Activated CD4-positive, alpha-beta memory T cell treated with anti-CD3 and anti-CD28 coated beads, Interleukin-2, amount 10 ng/mL, durations not matched to agents 7 days and 5 days (primary cell): ENCODE measurements at regions of chr7 and their contacts with region 1.

Region 1: DNA sequence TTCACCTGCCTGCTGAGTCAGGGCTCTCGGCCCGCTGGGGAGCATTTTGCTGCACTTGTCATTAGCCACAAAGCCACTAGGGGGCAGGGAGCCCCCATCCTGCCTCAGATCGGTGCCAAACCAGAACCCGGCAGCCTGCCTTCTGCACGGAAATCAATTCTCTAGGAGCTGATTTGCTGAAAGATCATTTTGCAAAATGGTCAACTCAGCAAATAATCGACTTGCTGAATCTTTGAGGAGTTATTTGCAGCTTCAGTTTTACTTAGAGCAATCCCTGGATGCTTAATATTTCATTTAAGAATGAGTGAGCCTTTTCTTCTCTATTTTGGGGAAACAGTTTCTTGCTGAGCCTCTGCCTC is 1.7 kb upstream of the GIMAP8 start:
- DNase-seq: peak; percentile 93
- H3K4me3 Mint-ChIP-seq: peak overlapping the region; percentile 53
- H3K27ac Mint-ChIP-seq: peak overlapping the region; percentile 87
- H3K4me1 Mint-ChIP-seq: peaks cover 57% of the 10 kb centered on the region
- H3K27me3 Mint-ChIP-seq: no peaks in the 10 kb centered on the region

Region 2: DNA sequence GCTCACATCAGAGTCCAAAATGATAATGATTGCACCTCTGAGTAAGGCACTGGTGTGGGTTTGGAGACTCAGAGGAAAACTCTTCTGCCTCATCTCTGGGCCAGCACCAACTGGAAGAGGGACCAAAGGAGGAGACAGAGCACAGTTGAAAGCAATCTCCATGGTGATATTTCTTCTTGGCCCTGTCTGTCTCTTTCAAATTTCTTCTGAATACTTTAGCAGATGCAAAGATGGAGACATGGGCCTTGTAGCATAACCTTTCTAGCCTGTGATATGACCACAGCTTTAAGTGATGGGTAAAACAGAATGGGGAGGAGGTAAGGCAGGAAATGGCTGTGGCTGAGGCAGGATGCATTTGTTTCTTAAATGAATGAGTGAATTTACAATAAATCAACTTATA is 53.8 kb after region 1 on chr7:
- CTCF ChIA-PET with region 1: interaction called, 14 read pairs
- POLR2A ChIA-PET with region 1: interaction called, 63 read pairs
- DNase-seq: peak; percentile 68
- H3K4me3 Mint-ChIP-seq: peak overlapping the region; percentile 29
- H3K27ac Mint-ChIP-seq: peak overlapping the region; percentile 90
- H3K4me1 Mint-ChIP-seq: peaks cover 75% of the 10 kb centered on the region
- H3K27me3 Mint-ChIP-seq: no peaks in the 10 kb centered on the region

Region 3: DNA sequence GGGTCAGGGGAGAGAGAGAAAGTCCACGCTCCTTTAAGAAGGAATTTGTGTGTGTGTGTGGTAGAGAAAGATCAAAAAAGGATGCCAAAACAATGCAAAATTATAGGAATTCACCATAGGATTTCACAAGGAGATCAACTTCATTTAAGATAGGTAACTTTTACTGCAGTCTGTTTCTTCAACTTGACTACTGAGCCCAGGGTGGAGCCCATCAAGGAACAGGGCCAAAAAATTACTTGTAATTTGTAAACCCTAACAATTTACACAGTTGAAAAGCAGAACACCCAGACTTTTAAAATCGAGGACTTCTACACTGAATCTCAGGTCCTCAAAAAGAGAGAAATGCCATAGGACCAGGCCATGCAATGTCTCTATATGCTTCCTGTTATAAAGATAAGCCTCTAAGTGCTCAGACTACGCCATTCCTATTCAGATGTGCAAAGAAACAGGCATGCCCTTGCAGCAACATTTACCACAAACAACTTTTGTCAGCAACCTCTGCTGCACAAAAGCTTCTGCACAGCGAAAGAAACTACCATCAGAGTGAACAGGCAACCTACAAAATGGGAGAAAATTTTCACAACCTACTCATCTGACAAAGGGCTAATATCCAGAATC is 107.9 kb after region 1 on chr7:
- CTCF ChIA-PET with region 1: interaction called, 21 read pairs
- POLR2A ChIA-PET with region 1: interaction called, 3 read pairs
- DNase-seq: peak; percentile 55
- H3K4me3 Mint-ChIP-seq: peak overlapping the region; percentile 55
- H3K27ac Mint-ChIP-seq: peak overlapping the region; percentile 97
- H3K4me1 Mint-ChIP-seq: peaks cover 55% of the 10 kb centered on the region
- H3K27me3 Mint-ChIP-seq: no peaks in the 10 kb centered on the region

Region 4: DNA sequence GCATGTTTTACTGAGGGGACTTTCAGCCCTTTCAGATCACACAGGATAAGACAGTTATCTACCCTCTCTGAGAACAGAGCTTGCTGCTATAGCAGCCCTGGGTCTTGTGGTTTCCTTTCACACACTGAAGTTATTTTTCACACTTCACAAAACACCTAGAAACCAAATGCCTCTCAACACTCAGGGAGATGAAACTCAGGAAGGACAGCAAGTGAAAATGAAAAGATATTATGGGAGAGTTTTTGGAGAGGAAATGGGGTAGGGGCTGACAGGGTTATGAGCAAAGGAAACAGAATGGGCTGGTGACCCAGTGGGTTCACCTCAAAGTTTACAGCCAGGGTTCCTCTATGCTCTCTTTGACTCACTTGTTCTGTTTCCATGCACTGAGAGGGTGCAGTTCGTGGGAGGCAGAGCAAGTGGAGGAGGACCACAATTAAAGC is 219.7 kb after region 1 on chr7:
- CTCF ChIA-PET with region 1: interaction called, 7 read pairs
- POLR2A ChIA-PET with region 1: interaction called, 10 read pairs
- DNase-seq: peak; percentile 75
- H3K4me3 Mint-ChIP-seq: peak overlapping the region; percentile 41
- H3K27ac Mint-ChIP-seq: peak overlapping the region; percentile 95
- H3K4me1 Mint-ChIP-seq: peaks cover 84% of the 10 kb centered on the region
- H3K27me3 Mint-ChIP-seq: no peaks in the 10 kb centered on the region

Region 5: DNA sequence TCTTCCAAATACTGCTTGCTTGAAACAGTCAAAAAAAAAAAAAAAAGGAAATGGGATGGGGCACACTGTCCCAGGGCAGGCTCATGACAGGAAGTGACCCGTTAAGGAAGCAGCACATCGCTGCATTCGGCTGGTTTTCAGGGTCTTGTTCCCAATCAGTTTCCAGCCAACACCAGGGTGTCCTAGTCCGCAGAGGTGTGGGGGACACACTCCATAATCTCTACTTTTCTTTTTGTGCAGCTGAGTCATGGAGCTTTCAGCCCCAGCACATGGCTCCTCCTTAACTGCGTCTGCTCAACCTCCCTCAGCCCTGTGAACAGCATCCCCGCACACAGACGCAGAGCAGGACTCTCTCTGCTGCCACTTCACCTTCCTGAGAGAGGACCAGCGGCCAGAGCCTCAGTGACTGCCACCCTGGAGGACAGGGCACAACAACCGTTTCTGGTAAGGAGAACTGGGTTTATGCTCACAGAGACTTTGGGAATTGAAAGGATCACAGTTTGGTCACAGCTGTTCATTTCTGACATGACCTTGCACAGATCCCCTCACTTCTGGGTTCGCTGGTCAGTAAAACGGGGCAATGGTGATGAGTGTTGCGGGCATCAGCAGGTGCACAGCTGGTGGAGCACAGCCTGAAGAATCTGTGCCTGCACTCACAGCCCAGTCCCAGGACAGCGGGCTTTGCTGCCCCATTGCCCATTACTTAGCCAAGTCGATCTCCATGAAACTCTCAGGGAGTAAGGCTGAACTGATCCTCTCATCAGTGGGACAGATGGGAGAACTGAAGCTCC is 288.7 kb after region 1 on chr7 and contains the start of gene GIMAP5:
- CTCF ChIA-PET with region 1: interaction called, 16 read pairs
- POLR2A ChIA-PET with region 1: interaction called, 34 read pairs
- DNase-seq: peak; percentile 65
- H3K4me3 Mint-ChIP-seq: peak within 1 kb of the TSS; percentile 99
- H3K27ac Mint-ChIP-seq: peak within 1 kb of the TSS; percentile 94
- H3K4me1 Mint-ChIP-seq: peaks cover 80% of the 10 kb centered on the region
- H3K27me3 Mint-ChIP-seq: no peaks in the 10 kb centered on the region
- total RNA-seq, gene GIMAP5: 83.9 to 84.3 TPM

Region 6: DNA sequence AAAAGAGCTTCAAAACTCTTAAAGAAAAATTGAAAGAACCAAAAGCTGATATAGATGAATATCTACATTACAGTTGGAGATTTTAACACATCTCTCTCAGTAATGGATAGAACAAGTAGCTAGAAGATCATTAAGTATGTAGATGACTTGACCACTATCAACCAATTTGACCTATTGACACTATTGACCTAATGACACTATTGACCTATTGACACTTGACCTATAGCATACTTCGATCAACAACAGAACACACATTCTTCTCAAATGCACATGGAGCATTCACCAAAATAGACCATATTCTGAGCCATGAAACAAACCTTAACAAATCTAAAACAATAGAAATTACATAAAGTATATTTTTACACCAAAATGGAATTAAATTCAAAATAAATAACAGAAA is 310.7 kb after region 1 on chr7:
- CTCF ChIA-PET with region 1: interaction called, 105 read pairs
- POLR2A ChIA-PET with region 1: interaction called, 127 read pairs
- DNase-seq: no peak
- H3K4me3 Mint-ChIP-seq: no peak overlapping the region
- H3K27ac Mint-ChIP-seq: no peak overlapping the region
- H3K4me1 Mint-ChIP-seq: peaks cover 22% of the 10 kb centered on the region
- H3K27me3 Mint-ChIP-seq: no peaks in the 10 kb centered on the region